ENCODE measurements at regions of chr1 and their contacts with region 1.

Region 1: DNA sequence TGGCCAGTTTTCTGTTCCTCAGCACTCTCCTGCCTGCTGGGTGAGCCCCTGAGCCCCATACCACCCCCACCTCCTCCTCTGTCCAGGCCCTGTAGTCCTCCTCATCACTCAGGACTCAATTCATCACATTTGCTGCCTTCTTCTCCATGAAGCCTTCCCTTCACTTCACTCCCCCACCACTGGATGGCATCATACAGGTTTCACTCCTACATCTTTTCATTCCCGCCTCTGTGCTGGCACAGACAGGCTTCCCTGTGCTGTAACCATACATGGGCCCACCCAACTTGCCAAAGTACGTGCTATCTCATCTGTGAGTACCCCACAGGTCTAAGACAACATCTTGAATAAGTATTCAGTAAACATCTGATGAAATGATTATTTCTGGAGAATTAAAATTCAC is 56.9 kb downstream of the SLC45A1 start:
- DNase-seq: peak; percentile 46
- H3K4me3 ChIP-seq: no peak overlapping the region
- H3K27ac ChIP-seq: no peak overlapping the region
- H3K4me1 ChIP-seq: peaks cover 19% of the 10 kb centered on the region
- H3K27me3 ChIP-seq: no peaks in the 10 kb centered on the region
- CTCF ChIP-seq: peak; percentile 61 to 69

Region 2: GRCh38 chr1:8396786-8397406 is 22.1 kb after region 1 on chr1:
- CTCF ChIA-PET with region 1: no interaction called
- dilution Hi-C with region 1: no loop called
- in situ Hi-C with region 1: no loop called
- intact Hi-C with region 1: loop called (anchors 2 kb)
- DNase-seq: peak; percentile 98
- H3K4me3 ChIP-seq: no peak overlapping the region
- H3K27ac ChIP-seq: peak overlapping the region; percentile 79
- H3K4me1 ChIP-seq: peaks cover 26% of the 10 kb centered on the region
- H3K27me3 ChIP-seq: no peaks in the 10 kb centered on the region
- CTCF ChIP-seq: no peak

Region 3: DNA sequence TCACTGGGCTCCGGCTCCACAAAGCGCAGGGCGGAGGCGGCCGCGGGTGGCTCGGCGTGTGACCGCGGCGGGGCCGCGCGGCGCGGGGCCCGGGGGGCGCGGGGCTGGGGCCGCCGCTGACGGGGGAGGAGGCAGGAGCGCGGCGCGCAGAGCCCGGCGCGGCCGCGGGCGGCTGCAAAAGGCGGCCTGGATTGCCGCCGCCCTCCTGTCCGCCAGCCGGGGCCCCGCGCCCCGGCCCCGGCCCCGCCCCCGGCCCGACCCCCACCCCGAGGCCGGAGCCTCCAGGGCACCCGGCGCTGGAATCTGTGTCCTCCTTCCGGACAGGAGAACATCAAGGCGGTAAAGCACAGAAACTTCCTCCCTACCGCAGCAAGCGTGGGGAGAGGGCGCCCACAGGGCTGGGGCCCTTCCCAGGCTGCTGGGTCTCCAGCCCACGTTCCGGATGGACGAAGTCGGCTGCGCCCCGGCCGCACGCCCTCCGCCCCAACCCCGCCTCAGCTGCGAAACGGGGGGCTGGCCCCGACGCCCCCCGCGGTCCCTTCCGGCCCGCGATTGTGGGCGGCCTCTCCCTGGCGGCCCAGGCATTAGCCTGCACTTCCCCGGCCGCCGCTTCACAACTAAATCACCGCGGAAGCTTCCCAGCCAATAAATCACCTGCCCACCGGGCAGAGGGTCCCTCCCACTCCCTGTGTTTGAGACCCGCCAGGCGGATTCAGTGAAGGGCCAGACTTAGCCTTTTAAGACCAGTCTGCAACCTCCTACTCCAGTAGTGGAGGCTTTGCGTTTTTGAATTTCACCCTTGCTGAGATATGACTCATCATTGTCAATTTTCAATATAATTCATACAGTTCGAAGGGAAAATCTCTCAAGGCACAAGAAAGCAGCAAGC is 49.1 kb after region 1 on chr1:
- CTCF ChIA-PET with region 1: no interaction called
- dilution Hi-C with region 1: no loop called
- in situ Hi-C with region 1: no loop called
- intact Hi-C with region 1: loop called (anchors 1 kb)
- DNase-seq: peak; percentile 51
- H3K4me3 ChIP-seq: peak overlapping the region; percentile 71 to 88 (median 77)
- H3K27ac ChIP-seq: peak overlapping the region; percentile 79
- H3K4me1 ChIP-seq: peaks cover 14% of the 10 kb centered on the region
- H3K27me3 ChIP-seq: no peaks in the 10 kb centered on the region
- CTCF ChIP-seq: no peak

Region 4: DNA sequence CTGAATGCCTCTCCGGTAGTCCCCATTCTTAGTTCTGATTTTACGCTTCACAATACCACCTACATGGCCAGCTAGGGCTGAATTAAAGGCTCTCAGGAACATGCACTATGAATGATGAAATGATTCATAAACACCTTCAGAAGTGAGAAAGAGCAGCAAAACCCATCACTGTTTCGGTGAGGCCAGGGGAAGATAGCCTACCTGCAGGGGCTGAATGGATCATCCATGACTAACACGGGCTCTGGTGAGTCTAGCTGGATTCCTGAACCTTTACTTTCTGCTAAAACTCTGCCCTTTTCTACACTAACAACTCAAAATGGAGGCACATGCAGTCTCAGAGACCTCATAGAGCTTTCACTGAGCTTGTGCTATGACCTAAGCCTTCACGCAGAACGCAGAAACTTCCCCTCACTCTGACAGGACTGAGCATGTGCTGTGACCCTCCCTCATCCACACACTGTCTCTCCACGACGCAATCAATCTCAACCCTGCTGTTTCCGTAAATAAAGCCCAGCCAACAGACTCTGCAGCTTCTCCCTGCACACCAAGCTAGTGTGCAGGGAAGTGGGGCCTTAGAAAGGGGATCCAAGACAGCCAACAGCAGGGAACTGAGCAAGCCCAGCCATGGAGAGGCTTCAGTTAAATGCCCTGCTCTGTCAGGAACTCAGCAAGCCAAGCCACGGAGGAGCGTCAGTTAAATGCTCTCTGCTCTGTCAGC is 150.9 kb after region 1 on chr1:
- CTCF ChIA-PET with region 1: no interaction called
- dilution Hi-C with region 1: no loop called
- in situ Hi-C with region 1: no loop called
- intact Hi-C with region 1: loop called (anchors 10 kb)
- DNase-seq: peak; percentile 95
- H3K4me3 ChIP-seq: peak overlapping the region; percentile 62 to 70 (median 63)
- H3K27ac ChIP-seq: peak overlapping the region; percentile 93
- H3K4me1 ChIP-seq: peaks cover 32% of the 10 kb centered on the region
- H3K27me3 ChIP-seq: no peaks in the 10 kb centered on the region
- CTCF ChIP-seq: no peak

Region 5: GRCh38 chr1:8671306-8671917 is 296.6 kb after region 1 on chr1:
- CTCF ChIA-PET with region 1: no interaction called
- dilution Hi-C with region 1: no loop called
- in situ Hi-C with region 1: no loop called
- intact Hi-C with region 1: loop called (anchors 2 kb)
- DNase-seq: no peak
- H3K4me3 ChIP-seq: no peak overlapping the region
- H3K27ac ChIP-seq: no peak overlapping the region
- H3K4me1 ChIP-seq: peaks cover 18% of the 10 kb centered on the region
- H3K27me3 ChIP-seq: no peaks in the 10 kb centered on the region
- CTCF ChIP-seq: peak; percentile 77 to 81

Region 6: GRCh38 chr1:8727809-8728213 is 353.0 kb after region 1 on chr1:
- CTCF ChIA-PET with region 1: no interaction called
- dilution Hi-C with region 1: no loop called
- in situ Hi-C with region 1: no loop called
- intact Hi-C with region 1: loop called (anchors 5 kb)
- DNase-seq: no peak
- H3K4me3 ChIP-seq: no peak overlapping the region
- H3K27ac ChIP-seq: no peak overlapping the region
- H3K4me1 ChIP-seq: peaks cover 5% of the 10 kb centered on the region
- H3K27me3 ChIP-seq: no peaks in the 10 kb centered on the region
- CTCF ChIP-seq: no peak

Region 7: GRCh38 chr1:8848663-8849386 is 474.0 kb after region 1 on chr1:
- CTCF ChIA-PET with region 1: no interaction called
- dilution Hi-C with region 1: no loop called
- in situ Hi-C with region 1: no loop called
- intact Hi-C with region 1: loop called (anchors 10 kb)
- DNase-seq: peak; percentile 86
- H3K4me3 ChIP-seq: no peak overlapping the region
- H3K27ac ChIP-seq: no peak overlapping the region
- H3K4me1 ChIP-seq: peaks cover 4% of the 10 kb centered on the region
- H3K27me3 ChIP-seq: no peaks in the 10 kb centered on the region
- CTCF ChIP-seq: peak; percentile 77 to 97